Calu3 (cell line): ENCODE measurements at regions of chr2 and their contacts with region 1.

Region 1: GRCh38 chr2:28702415-28702861 is 49.2 kb upstream of the PPP1CB start:
- DNase-seq: no peak
- H3K4me3 Mint-ChIP-seq: no peak overlapping the region
- H3K27ac Mint-ChIP-seq: no peak overlapping the region
- H3K4me1 Mint-ChIP-seq: no peaks in the 10 kb centered on the region
- H3K27me3 Mint-ChIP-seq: no peaks in the 10 kb centered on the region
- CTCF ChIP-seq: no peak

Region 2: GRCh38 chr2:28716265-28716867 is 13.9 kb after region 1 on chr2:
- CTCF ChIA-PET with region 1: interaction called, 10 read pairs
- intact Hi-C with region 1: no loop called
- DNase-seq: peak; percentile 66
- H3K4me3 Mint-ChIP-seq: peak overlapping the region; percentile 23
- H3K27ac Mint-ChIP-seq: peak overlapping the region; percentile 83
- H3K4me1 Mint-ChIP-seq: peaks cover 36% of the 10 kb centered on the region
- H3K27me3 Mint-ChIP-seq: no peaks in the 10 kb centered on the region
- CTCF ChIP-seq: no peak